Activated B cell treated with CpG ODN at 0.5 μM for 24 hours (primary cell): ENCODE measurements at regions of chr18 and their contacts with region 1.

Region 1: GRCh38 chr18:54357660-54358494 is at the starts of genes C18orf54 and STARD6:
- DNase-seq: peak; percentile 89
- ATAC-seq: peak; percentile 95
- H3K4me3 Mint-ChIP-seq: peak within 1 kb of the TSS; percentile 99
- H3K27ac Mint-ChIP-seq: peak within 1 kb of the TSS; percentile 93
- H3K4me1 Mint-ChIP-seq: peaks cover 15% of the 10 kb centered on the region
- H3K27me3 Mint-ChIP-seq: no peaks in the 10 kb centered on the region
- CTCF ChIP-seq: no peak
- total RNA-seq, gene C18orf54: 1.9 TPM in 2 replicates
- total RNA-seq, gene STARD6: not detected in 2 replicates

Region 2: DNA sequence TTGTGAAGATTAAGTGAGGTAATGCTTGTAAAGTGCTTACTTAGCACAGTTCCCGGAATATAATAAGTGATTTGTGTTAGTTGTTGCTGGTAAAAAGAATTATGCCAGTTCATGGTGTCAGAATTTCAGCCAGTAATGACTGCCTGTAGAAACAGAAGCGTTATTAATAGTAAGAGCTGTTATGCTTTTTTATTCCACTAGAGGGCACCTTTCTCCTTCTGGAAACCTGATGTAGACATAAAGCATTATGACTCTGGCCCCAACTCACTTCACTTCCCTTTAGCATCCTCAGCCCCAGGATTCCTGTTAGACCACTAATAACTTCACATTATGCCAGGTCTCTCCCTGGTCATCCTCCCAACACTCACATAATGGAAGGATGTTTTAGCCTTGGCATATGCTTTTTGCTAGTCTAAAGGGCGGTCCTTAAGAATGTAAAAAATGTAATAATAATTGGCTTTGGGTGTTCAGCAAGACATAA is 34.7 kb after region 1 on chr18:
- CTCF ChIA-PET with region 1: interaction called, 10 read pairs
- POLR2A ChIA-PET with region 1: no interaction called
- intact Hi-C with region 1: loop called (anchors 2 kb)
- DNase-seq: no peak
- ATAC-seq: peak; percentile 65
- H3K4me3 Mint-ChIP-seq: no peak overlapping the region
- H3K27ac Mint-ChIP-seq: no peak overlapping the region
- H3K4me1 Mint-ChIP-seq: peaks cover 2% of the 10 kb centered on the region
- H3K27me3 Mint-ChIP-seq: peaks cover 4% of the 10 kb centered on the region
- CTCF ChIP-seq: no peak